ENCODE measurements at regions of chr7 and their contacts with region 1.

Region 1: GRCh38 chr7:80307227-80307856 is 172.7 kb downstream of the GNAI1 start:
- DNase-seq: peak; percentile 85
- ATAC-seq: peak; percentile 57
- H3K4me3 ChIP-seq: no peak overlapping the region
- H3K27ac ChIP-seq: no peak overlapping the region
- H3K4me1 ChIP-seq: peaks cover 2% of the 10 kb centered on the region
- H3K27me3 ChIP-seq: no peaks in the 10 kb centered on the region
- CTCF ChIP-seq: no peak
- POLR2A ChIP-seq: no peak
- RAD21 ChIP-seq: no peak

Region 2: GRCh38 chr7:79459381-79459780 is 848.0 kb before region 1 on chr7:
- CTCF ChIA-PET with region 1: no interaction called
- POLR2A ChIA-PET with region 1: interaction called, 13 read pairs
- dilution Hi-C with region 1: no loop called
- in situ Hi-C with region 1: no loop called
- intact Hi-C with region 1: no loop called
- DNase-seq: peak; percentile 46
- ATAC-seq: peak; percentile 40
- H3K4me3 ChIP-seq: no peak overlapping the region
- H3K27ac ChIP-seq: no peak overlapping the region
- H3K4me1 ChIP-seq: peaks cover 15% of the 10 kb centered on the region
- H3K27me3 ChIP-seq: no peaks in the 10 kb centered on the region
- CTCF ChIP-seq: no peak
- POLR2A ChIP-seq: no peak
- RAD21 ChIP-seq: no peak

Region 3: GRCh38 chr7:80206763-80207162 is 100.6 kb before region 1 on chr7:
- CTCF ChIA-PET with region 1: no interaction called
- POLR2A ChIA-PET with region 1: no interaction called
- dilution Hi-C with region 1: loop called (anchors 10 kb)
- in situ Hi-C with region 1: no loop called
- intact Hi-C with region 1: no loop called
- DNase-seq: no peak
- ATAC-seq: no peak
- H3K4me3 ChIP-seq: no peak overlapping the region
- H3K27ac ChIP-seq: no peak overlapping the region
- H3K4me1 ChIP-seq: 0 out of 2 replicates have a peak, but pooled peaks cover 2% of the 10 kb centered on the region
- H3K27me3 ChIP-seq: no peaks in the 10 kb centered on the region
- CTCF ChIP-seq: no peak
- POLR2A ChIP-seq: no peak
- RAD21 ChIP-seq: no peak

Measured in IMR-90 (cell line).